BJ (cell line): ENCODE measurements at regions of chr5 and their contacts with region 1.

Region 1: GRCh38 chr5:102778478-102778877 is 23.4 kb downstream of the PAM start:
- DNase-seq: peak; percentile 74
- H3K4me3 ChIP-seq: no peak overlapping the region
- H3K27me3 ChIP-seq: no peaks in the 10 kb centered on the region
- CTCF ChIP-seq: no peak

Region 2: DNA sequence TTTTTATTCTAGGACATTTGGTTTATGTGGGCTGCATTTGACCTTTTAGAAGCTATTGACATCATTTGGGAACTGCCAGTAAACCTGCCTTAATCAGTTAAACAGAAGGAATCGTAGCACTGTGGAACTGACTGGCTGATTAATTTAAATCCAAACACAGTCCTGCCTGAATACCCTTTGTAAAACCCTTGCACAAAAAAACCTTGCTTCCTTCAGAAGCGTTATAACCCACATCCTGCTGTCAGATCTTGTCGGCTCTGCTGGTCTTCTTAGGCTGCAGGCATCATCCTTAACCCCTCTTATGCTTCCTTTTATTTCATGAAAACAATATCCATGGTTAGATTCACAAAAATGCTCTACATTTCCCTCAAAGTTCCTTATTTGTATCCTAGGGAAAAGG is 22.9 kb after region 1 on chr5:
- CTCF ChIA-PET with region 1: interaction called, 11 read pairs
- POLR2A ChIA-PET with region 1: no interaction called
- DNase-seq: no peak
- H3K4me3 ChIP-seq: no peak overlapping the region
- H3K27me3 ChIP-seq: no peaks in the 10 kb centered on the region
- CTCF ChIP-seq: no peak

Region 3: GRCh38 chr5:102865510-102866236 is 87.2 kb after region 1 on chr5:
- CTCF ChIA-PET with region 1: interaction called, 12 read pairs
- POLR2A ChIA-PET with region 1: no interaction called
- DNase-seq: peak; percentile 62
- H3K4me3 ChIP-seq: peak overlapping the region; percentile 55
- H3K27me3 ChIP-seq: no peaks in the 10 kb centered on the region
- CTCF ChIP-seq: no peak

Region 4: GRCh38 chr5:103010168-103010567 is 231.7 kb after region 1 on chr5:
- CTCF ChIA-PET with region 1: no interaction called
- POLR2A ChIA-PET with region 1: no interaction called
- DNase-seq: no peak
- H3K4me3 ChIP-seq: no peak overlapping the region
- H3K27me3 ChIP-seq: no peaks in the 10 kb centered on the region
- CTCF ChIP-seq: no peak

Region 5: GRCh38 chr5:103178167-103178566 is 399.7 kb after region 1 on chr5:
- CTCF ChIA-PET with region 1: no interaction called
- POLR2A ChIA-PET with region 1: no interaction called
- DNase-seq: no peak
- H3K4me3 ChIP-seq: no peak overlapping the region
- H3K27me3 ChIP-seq: no peaks in the 10 kb centered on the region
- CTCF ChIP-seq: no peak